ENCODE measurements at regions of chr13 and their contacts with region 1.

Region 1: GRCh38 chr13:31161828-31162590 is at the start of gene HSPH1:
- DNase-seq: peak; percentile 96 to 99 (median 98)
- ATAC-seq: peak; percentile 83
- H3K4me3 ChIP-seq: peak within 1 kb of the TSS; percentile 76 to 95
- H3K4me3 Mint-ChIP-seq: peak within 1 kb of the TSS; percentile 95
- H3K27ac ChIP-seq: peak within 1 kb of the TSS; percentile 98
- H3K27ac Mint-ChIP-seq: peak within 1 kb of the TSS; percentile 98
- H3K4me1 ChIP-seq: peaks cover 25% of the 10 kb centered on the region
- H3K4me1 Mint-ChIP-seq: peaks cover 43% of the 10 kb centered on the region
- H3K27me3 ChIP-seq: no peaks in the 10 kb centered on the region
- H3K27me3 Mint-ChIP-seq: no peaks in the 10 kb centered on the region
- CTCF ChIP-seq: no peak
- total RNA-seq, gene HSPH1: 189 to 199 TPM

Region 2: DNA sequence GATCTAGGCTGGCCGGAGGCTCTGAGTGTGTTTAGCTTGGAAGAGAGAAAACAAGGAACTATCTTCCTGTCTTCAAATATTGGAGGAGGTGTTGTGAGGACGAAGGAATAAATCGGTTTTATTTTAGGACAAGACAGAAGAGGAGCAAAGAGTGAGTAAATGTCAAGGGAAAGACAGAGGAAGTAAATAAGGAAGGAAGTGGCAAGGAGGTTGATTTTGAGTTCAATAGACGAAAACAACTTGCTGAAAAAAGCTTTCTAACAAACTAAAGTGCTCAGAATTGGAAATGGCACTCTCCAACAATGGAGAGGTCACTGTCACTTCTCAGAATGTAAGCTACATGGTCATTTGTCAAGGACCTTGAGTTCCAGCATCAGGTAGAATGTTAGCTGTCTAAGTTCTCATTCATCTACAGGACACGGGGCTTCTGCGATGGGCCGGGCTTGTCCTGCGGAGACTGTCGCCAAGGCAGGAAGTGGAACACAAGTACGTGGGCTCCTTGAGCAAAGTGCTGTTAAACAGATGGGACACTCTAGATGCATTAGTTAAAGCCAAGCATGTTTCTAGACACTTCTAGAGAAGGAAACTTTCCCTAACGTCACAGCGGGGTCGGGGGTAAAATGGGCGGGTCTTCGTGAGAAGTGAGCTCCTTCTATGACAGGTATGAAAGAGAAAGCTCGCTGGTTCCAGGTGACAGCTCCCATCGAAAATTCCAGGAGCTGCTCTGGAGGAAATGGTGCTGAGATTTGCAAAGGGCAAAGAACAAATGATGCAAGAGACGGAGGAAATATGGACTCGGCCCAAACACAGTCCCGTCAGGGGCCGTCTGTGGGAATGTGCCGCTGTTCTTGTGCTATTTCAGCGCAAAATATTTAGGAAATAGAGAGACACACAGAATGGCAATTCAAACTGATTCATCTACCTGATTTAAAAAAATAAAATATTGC is 1207.7 kb before region 1 on chr13:
- CTCF ChIA-PET with region 1: no interaction called
- POLR2A ChIA-PET with region 1: no interaction called
- intact Hi-C with region 1: loop called in 1 of 2 experiments (anchors 10 kb)
- DNase-seq: peak in 8 of 9 experiments; percentile 33 to 81 (median 58)
- ATAC-seq: peak; percentile 58
- H3K4me3 ChIP-seq: peak overlapping the region; percentile 35 to 46
- H3K4me3 Mint-ChIP-seq: peak overlapping the region; percentile 80
- H3K27ac ChIP-seq: peak overlapping the region; percentile 62 to 69
- H3K27ac Mint-ChIP-seq: peak overlapping the region; percentile 91
- H3K4me1 ChIP-seq: peaks cover 43% of the 10 kb centered on the region
- H3K4me1 Mint-ChIP-seq: peaks cover 54% of the 10 kb centered on the region
- H3K27me3 ChIP-seq: no peaks in the 10 kb centered on the region
- H3K27me3 Mint-ChIP-seq: peaks cover 2% of the 10 kb centered on the region
- CTCF ChIP-seq: no peak

Region 3: DNA sequence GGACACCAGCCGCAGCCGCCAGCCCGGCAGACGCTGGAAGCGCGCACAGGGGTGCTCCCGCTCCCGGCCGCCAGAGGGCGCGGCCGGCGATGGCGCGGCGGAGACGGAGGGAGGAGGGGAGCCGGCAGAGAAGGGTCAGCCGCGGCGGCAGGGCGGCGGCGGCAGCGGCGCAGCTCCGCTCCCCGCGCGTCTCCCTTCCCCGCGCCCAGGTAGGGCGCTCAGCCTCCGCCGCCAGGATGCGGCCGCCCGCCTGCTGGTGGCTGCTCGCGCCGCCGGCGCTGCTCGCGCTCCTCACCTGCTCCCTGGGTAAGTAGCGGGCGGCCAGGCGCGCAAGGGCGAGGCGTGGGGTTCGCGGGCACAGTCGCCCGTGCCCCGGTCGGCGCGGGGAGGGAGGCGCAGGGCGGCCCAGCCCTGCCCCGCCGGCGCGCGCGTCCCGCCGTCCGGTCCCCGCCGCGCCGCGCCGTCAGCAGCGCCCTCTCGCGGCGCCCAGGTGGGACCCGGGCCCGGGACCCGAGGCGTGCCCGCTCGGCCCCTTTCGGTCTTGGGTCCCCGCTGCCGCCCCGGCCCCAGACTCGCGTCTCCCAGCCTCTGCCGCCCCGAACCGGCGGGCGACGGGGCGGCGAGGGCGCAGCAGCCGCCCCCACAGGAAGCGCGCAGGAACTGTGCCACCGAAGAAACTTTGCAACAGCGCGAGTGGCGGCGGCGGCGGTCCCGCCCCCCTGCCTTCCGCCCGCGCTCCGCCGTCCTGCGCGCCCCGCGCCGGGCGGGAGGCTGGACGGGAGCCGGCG is 38.0 kb after region 1 on chr13 and contains the start of gene B3GLCT:
- CTCF ChIA-PET with region 1: no interaction called
- POLR2A ChIA-PET with region 1: interaction called, 9 read pairs
- intact Hi-C with region 1: loop called (anchors 1 kb)
- DNase-seq: peak; percentile 71 to 91 (median 80)
- ATAC-seq: peak; percentile 78
- H3K4me3 ChIP-seq: peak within 1 kb of the TSS; percentile 65 to 81
- H3K4me3 Mint-ChIP-seq: peak within 1 kb of the TSS; percentile 84
- H3K27ac ChIP-seq: peak within 1 kb of the TSS; percentile 88
- H3K27ac Mint-ChIP-seq: peak within 1 kb of the TSS; percentile 92
- H3K4me1 ChIP-seq: peaks cover 18% of the 10 kb centered on the region
- H3K4me1 Mint-ChIP-seq: peaks cover 29% of the 10 kb centered on the region
- H3K27me3 ChIP-seq: no peaks in the 10 kb centered on the region
- H3K27me3 Mint-ChIP-seq: no peaks in the 10 kb centered on the region
- CTCF ChIP-seq: peak; percentile 94
- total RNA-seq, gene B3GLCT: 5.0 TPM

Region 4: DNA sequence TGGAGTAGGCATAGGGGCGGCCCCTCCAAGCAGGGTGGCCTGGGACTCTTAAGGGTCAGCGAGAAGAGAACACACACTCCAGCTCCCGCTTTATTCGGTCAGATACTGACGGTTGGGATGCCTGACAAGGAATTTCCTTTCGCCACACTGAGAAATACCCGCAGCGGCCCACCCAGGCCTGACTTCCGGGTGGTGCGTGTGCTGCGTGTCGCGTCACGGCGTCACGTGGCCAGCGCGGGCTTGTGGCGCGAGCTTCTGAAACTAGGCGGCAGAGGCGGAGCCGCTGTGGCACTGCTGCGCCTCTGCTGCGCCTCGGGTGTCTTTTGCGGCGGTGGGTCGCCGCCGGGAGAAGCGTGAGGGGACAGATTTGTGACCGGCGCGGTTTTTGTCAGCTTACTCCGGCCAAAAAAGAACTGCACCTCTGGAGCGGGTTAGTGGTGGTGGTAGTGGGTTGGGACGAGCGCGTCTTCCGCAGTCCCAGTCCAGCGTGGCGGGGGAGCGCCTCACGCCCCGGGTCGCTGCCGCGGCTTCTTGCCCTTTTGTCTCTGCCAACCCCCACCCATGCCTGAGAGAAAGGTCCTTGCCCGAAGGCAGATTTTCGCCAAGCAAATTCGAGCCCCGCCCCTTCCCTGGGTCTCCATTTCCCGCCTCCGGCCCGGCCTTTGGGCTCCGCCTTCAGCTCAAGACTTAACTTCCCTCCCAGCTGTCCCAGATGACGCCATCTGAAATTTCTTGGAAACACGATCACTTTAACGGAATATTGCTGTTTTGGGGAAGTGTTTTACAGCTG is 1153.4 kb after region 1 on chr13 and contains the starts of genes BRCA2 and ZAR1L:
- CTCF ChIA-PET with region 1: no interaction called
- POLR2A ChIA-PET with region 1: no interaction called
- intact Hi-C with region 1: loop called in 1 of 2 experiments (anchors 10 kb)
- DNase-seq: peak; percentile 73 to 95 (median 88)
- ATAC-seq: peak; percentile 90
- H3K4me3 ChIP-seq: peak within 1 kb of the TSS; percentile 80 to 81
- H3K4me3 Mint-ChIP-seq: peak within 1 kb of the TSS; percentile 93
- H3K27ac ChIP-seq: peak within 1 kb of the TSS; percentile 99
- H3K27ac Mint-ChIP-seq: peak within 1 kb of the TSS; percentile 100
- H3K4me1 ChIP-seq: peaks cover 4% of the 10 kb centered on the region
- H3K4me1 Mint-ChIP-seq: peaks cover 14% of the 10 kb centered on the region
- H3K27me3 ChIP-seq: no peaks in the 10 kb centered on the region
- H3K27me3 Mint-ChIP-seq: no peaks in the 10 kb centered on the region
- CTCF ChIP-seq: no peak
- total RNA-seq, gene BRCA2: 2.6 to 3.6 TPM
- total RNA-seq, gene ZAR1L: not detected